ENCODE measurements at regions of chr5 and their contacts with region 1.

Region 1: GRCh38 chr5:103041071-103041676 is 78.8 kb downstream of the GIN1 start:
- DNase-seq: peak; percentile 20
- ATAC-seq: no peak
- H3K4me3 ChIP-seq: no peak overlapping the region
- H3K27ac ChIP-seq: no peak overlapping the region
- H3K4me1 ChIP-seq: no peaks in the 10 kb centered on the region
- H3K27me3 ChIP-seq: no peaks in the 10 kb centered on the region
- CTCF ChIP-seq: peak; percentile 53
- EP300 ChIP-seq: no peak
- POLR2A ChIP-seq: no peak
- RAD21 ChIP-seq: no peak

Region 2: GRCh38 chr5:102583276-102584124 is 457.7 kb before region 1 on chr5:
- CTCF ChIA-PET with region 1: interaction called, 9 read pairs
- POLR2A ChIA-PET with region 1: no interaction called
- in situ Hi-C with region 1: loop called (anchors 10 kb)
- intact Hi-C with region 1: loop called (anchors 1 kb)
- DNase-seq: no peak
- ATAC-seq: no peak
- H3K4me3 ChIP-seq: no peak overlapping the region
- H3K27ac ChIP-seq: no peak overlapping the region
- H3K4me1 ChIP-seq: no peaks in the 10 kb centered on the region
- H3K27me3 ChIP-seq: no peaks in the 10 kb centered on the region; a peak in 1 of 5 replicates
- CTCF ChIP-seq: no peak
- EP300 ChIP-seq: no peak
- POLR2A ChIP-seq: no peak
- RAD21 ChIP-seq: no peak

Region 3: DNA sequence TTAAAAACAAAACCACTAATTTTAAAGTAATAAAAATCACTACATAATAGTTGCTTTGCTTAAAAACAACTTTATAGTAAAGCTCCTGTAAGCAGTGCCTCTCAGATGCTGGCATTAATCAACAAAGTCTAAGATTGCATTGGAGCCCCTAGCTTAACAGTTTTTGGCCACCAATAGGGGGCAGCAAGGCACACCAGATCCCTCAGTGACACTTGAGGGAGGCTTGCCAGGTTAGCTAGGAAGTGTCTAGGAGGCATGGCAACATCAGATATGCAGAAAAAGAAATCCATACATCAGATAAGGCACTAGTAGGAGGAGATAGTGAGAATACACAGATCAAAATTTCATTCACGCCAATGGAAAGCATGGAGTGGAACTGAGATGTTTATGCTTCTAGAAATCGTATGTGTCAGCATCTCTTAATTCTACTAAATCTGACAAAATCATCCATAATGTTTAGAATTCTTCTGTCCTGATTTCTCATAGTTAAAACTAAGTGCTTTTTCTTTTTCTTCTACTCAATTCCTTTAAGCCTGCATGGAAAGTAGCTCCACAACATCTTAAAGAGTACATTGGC is 359.7 kb before region 1 on chr5:
- CTCF ChIA-PET with region 1: interaction called, 10 read pairs
- POLR2A ChIA-PET with region 1: no interaction called
- in situ Hi-C with region 1: no loop called
- intact Hi-C with region 1: loop called (anchors 1 kb)
- DNase-seq: peak; percentile 46
- ATAC-seq: peak; percentile 87
- H3K4me3 ChIP-seq: no peak overlapping the region
- H3K27ac ChIP-seq: no peak overlapping the region
- H3K4me1 ChIP-seq: no peaks in the 10 kb centered on the region; the same call in 1 of the 2 replicates
- H3K27me3 ChIP-seq: no peaks in the 10 kb centered on the region
- CTCF ChIP-seq: peak; percentile 84
- EP300 ChIP-seq: no peak
- POLR2A ChIP-seq: no peak
- RAD21 ChIP-seq: 0 out of 2 replicates have a peak, but pooled peaks have one; percentile 26

Region 4: GRCh38 chr5:102778478-102778877 is 262.7 kb before region 1 on chr5:
- CTCF ChIA-PET with region 1: interaction called, 9 read pairs
- POLR2A ChIA-PET with region 1: no interaction called
- in situ Hi-C with region 1: no loop called
- intact Hi-C with region 1: loop called (anchors 1 kb)
- DNase-seq: no peak
- ATAC-seq: no peak
- H3K4me3 ChIP-seq: no peak overlapping the region
- H3K27ac ChIP-seq: no peak overlapping the region
- H3K4me1 ChIP-seq: no peaks in the 10 kb centered on the region
- H3K27me3 ChIP-seq: no peaks in the 10 kb centered on the region
- CTCF ChIP-seq: no peak
- EP300 ChIP-seq: no peak
- POLR2A ChIP-seq: no peak
- RAD21 ChIP-seq: no peak

Region 5: DNA sequence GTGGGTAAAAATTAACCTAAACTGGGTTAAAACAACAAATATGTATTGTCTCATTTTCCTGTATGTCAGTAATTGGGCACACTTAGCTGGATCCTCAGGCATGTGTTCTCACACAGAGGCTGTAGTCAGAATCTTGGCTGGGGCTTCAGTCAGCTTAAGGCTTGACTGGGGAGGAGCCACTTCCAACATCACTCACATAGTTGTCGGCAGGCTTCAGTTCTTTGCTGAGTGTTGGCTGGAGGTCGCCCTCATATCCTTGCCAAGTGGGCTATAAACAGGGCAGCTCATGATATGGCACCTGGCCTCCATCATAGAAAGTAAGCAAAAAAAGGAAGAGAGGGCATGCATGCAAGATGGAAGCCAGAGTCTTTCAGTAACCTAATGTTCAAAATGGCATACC is 94.2 kb before region 1 on chr5:
- CTCF ChIA-PET with region 1: no interaction called
- POLR2A ChIA-PET with region 1: no interaction called
- in situ Hi-C with region 1: no loop called
- intact Hi-C with region 1: no loop called
- DNase-seq: no peak
- ATAC-seq: no peak
- H3K4me3 ChIP-seq: no peak overlapping the region
- H3K27ac ChIP-seq: no peak overlapping the region
- H3K4me1 ChIP-seq: no peaks in the 10 kb centered on the region
- H3K27me3 ChIP-seq: no peaks in the 10 kb centered on the region
- CTCF ChIP-seq: no peak
- EP300 ChIP-seq: no peak
- POLR2A ChIP-seq: no peak
- RAD21 ChIP-seq: no peak

Region 6: DNA sequence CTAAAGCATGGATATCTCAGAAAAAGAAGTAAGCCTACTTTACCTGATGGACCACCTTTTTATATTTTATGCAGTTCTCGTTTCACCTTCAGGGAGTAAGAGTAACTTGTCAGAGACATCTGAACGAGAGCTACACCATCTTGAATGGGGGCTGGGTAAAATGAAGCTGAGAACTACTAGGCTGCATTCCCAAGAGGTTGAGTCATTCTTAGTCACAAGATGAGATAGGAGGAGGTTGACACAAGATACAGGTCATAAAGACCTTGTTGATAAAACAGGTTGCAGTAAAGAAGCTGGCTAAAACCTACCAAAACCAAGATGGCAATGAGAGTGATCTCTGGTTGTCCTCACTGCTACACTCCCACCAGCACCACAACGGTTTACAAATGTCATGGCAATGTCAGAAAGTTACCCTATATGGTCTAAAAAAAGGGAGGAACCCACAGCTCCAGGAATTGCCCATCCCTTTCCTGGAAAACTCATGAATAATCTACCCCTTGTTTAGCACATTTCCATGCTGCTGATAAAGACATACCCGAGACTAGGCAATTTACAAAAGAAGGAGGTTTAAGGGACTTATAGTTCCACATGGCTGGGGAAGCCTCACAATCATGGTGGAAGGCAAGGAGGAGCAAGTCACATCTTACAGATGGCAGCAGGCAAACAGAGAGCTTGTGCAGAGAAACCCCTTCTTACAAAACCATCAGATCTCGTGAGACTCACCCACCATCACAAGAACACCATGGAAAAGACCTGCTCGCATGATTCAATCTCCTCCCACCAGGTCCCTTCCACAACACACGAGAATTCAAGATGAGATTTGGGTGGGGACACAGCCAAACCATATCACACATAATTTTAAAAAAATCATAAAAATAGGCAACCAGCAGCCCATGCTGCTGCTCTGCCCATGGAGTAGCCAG is 16.3 kb after region 1 on chr5:
- CTCF ChIA-PET with region 1: no interaction called
- POLR2A ChIA-PET with region 1: no interaction called
- in situ Hi-C with region 1: no loop called
- intact Hi-C with region 1: loop called (anchors 1 kb)
- DNase-seq: no peak
- ATAC-seq: no peak
- H3K4me3 ChIP-seq: no peak overlapping the region
- H3K27ac ChIP-seq: no peak overlapping the region
- H3K4me1 ChIP-seq: no peaks in the 10 kb centered on the region
- H3K27me3 ChIP-seq: no peaks in the 10 kb centered on the region; a peak in 1 of 5 replicates
- CTCF ChIP-seq: no peak
- EP300 ChIP-seq: no peak
- POLR2A ChIP-seq: no peak
- RAD21 ChIP-seq: no peak

Measured in HepG2 (cell line).